ENCODE measurements at regions of chr2 and their contacts with region 1.

Region 1: DNA sequence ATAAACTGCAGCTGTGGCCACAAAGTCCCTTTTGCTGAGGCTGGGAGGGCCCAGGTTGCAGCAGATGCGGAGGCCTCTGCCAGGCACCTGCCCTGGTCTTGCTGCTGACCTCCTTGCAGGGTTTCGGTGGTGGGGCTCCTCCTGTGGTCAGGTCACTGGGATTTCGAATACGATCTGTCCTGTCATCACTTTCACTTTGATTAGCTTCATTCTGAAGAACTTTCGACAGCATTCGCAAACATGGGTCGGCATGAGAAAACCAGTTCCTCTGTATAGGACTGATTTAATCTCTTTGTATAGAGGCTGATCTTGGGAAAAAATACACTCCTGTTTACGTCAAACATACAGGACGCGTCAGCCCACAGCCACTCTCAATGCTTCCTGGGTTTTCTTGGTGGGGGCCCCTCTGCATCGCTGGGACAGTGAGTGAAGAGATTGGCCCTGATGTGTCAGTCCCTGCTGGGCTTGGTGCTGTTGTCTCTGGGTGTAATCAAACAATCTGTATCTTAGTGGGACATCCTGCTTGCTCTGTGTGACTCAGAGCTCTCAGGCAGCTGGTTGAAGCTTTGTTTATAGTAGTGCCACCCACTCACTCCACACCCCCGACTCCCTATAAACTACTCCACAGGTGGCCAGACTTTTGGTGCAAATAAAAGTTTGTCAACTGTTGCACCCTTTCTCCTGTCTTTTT is 209.4 kb upstream of the CXCR4 start:
- DNase-seq: peak in 2 of 3 donors; percentile 38 to 42
- H3K4me3 ChIP-seq: peak overlapping the region in 1 of 3 experiments; percentile 15
- H3K4me3 Mint-ChIP-seq: peak overlapping the region; percentile 53 to 59
- H3K27ac ChIP-seq: peak overlapping the region; percentile 27 to 59
- H3K27ac Mint-ChIP-seq: peak overlapping the region; percentile 43 to 88 (median 68)
- H3K4me1 ChIP-seq: peaks cover 56 to 60% of the 10 kb centered on the region in 2 donors
- H3K4me1 Mint-ChIP-seq: peaks cover 66% of the 10 kb centered on the region
- H3K27me3 ChIP-seq: no peaks in the 10 kb centered on the region
- H3K27me3 Mint-ChIP-seq: peaks cover 0 to 7% (median 0%) of the 10 kb centered on the region in 3 donors
- CTCF ChIP-seq: no peak

Region 2: GRCh38 chr2:136135921-136136906 is 191.1 kb before region 1 on chr2:
- intact Hi-C with region 1: loop called in 1 of 2 experiments (anchors 5 kb)
- DNase-seq: peak; percentile 30 to 53 (median 34)
- H3K4me3 ChIP-seq: peak overlapping the region in 2 of 3 experiments; percentile 6 to 66
- H3K4me3 Mint-ChIP-seq: peak overlapping the region; percentile 57 to 68
- H3K27ac ChIP-seq: peak overlapping the region; percentile 52 to 92
- H3K27ac Mint-ChIP-seq: peak overlapping the region; percentile 86 to 94 (median 89)
- H3K4me1 ChIP-seq: peaks cover 80 to 86% of the 10 kb centered on the region in 2 donors
- H3K4me1 Mint-ChIP-seq: peaks cover 96% of the 10 kb centered on the region
- H3K27me3 ChIP-seq: no peaks in the 10 kb centered on the region
- H3K27me3 Mint-ChIP-seq: peaks cover 0 to 2% (median 0%) of the 10 kb centered on the region in 3 donors
- CTCF ChIP-seq: no peak

Region 3: GRCh38 chr2:136212423-136213378 is 114.6 kb before region 1 on chr2:
- intact Hi-C with region 1: loop called (anchors 10 kb)
- DNase-seq: peak in 2 of 3 donors; percentile 41 to 42
- H3K4me3 ChIP-seq: no peak overlapping the region
- H3K4me3 Mint-ChIP-seq: no peak overlapping the region
- H3K27ac ChIP-seq: peak overlapping the region in 1 of 2 donors; percentile 96
- H3K27ac Mint-ChIP-seq: peak overlapping the region; percentile 93 to 99 (median 97)
- H3K4me1 ChIP-seq: peaks cover 72 to 91% of the 10 kb centered on the region in 2 donors
- H3K4me1 Mint-ChIP-seq: peaks cover 94% of the 10 kb centered on the region
- H3K27me3 ChIP-seq: no peaks in the 10 kb centered on the region
- H3K27me3 Mint-ChIP-seq: peaks cover 0 to 1% (median 0%) of the 10 kb centered on the region in 3 donors
- CTCF ChIP-seq: no peak

Region 4: GRCh38 chr2:136255648-136256463 is 71.5 kb before region 1 on chr2:
- intact Hi-C with region 1: loop called in 1 of 2 experiments (anchors 5 kb)
- DNase-seq: peak; percentile 87 to 95 (median 91)
- H3K4me3 ChIP-seq: no peak overlapping the region
- H3K4me3 Mint-ChIP-seq: no peak overlapping the region
- H3K27ac ChIP-seq: peak overlapping the region; percentile 88 to 91
- H3K27ac Mint-ChIP-seq: peak overlapping the region; percentile 94 to 96 (median 95)
- H3K4me1 ChIP-seq: peaks cover 37 to 39% of the 10 kb centered on the region in 2 donors
- H3K4me1 Mint-ChIP-seq: peaks cover 57% of the 10 kb centered on the region
- H3K27me3 ChIP-seq: no peaks in the 10 kb centered on the region
- H3K27me3 Mint-ChIP-seq: peaks cover 0 to 13% (median 0%) of the 10 kb centered on the region in 3 donors
- CTCF ChIP-seq: no peak

Region 5: DNA sequence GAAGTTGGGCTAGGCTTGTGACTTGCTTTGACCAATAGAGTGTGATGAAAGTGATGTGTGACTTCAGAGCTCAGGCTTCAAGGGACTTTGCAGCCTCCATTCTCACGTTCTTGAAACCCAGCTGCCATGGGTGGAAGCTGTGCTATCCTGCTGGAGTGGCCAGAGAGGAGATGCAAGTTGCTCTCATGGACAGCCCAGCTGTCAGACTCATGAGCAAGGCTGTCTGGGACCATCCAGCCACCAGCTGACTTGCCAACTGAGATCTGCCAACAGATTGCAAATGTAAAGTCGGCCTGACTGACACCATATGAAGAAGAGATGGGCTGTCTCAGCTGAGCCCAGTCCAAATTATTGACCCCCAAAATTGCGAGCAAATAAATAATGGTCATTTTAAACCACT is 17.0 kb after region 1 on chr2:
- intact Hi-C with region 1: no loop called
- DNase-seq: no peak
- H3K4me3 ChIP-seq: no peak overlapping the region
- H3K4me3 Mint-ChIP-seq: no peak overlapping the region
- H3K27ac ChIP-seq: no peak overlapping the region
- H3K27ac Mint-ChIP-seq: peak overlapping the region in 2 of 7 donors; percentile 18 to 26
- H3K4me1 ChIP-seq: no peaks in the 10 kb centered on the region
- H3K4me1 Mint-ChIP-seq: no peaks in the 10 kb centered on the region
- H3K27me3 ChIP-seq: no peaks in the 10 kb centered on the region
- H3K27me3 Mint-ChIP-seq: peaks cover 0 to 2% (median 2%) of the 10 kb centered on the region in 3 donors
- CTCF ChIP-seq: no peak

Region 6: GRCh38 chr2:136378712-136379595 is 51.6 kb after region 1 on chr2:
- intact Hi-C with region 1: loop called in 1 of 2 experiments (anchors 5 kb)
- DNase-seq: peak; percentile 59 to 74 (median 67)
- H3K4me3 ChIP-seq: peak overlapping the region in 1 of 3 experiments; percentile 12
- H3K4me3 Mint-ChIP-seq: no peak overlapping the region
- H3K27ac ChIP-seq: peak overlapping the region in 1 of 2 donors; percentile 36
- H3K27ac Mint-ChIP-seq: peak overlapping the region in 5 of 7 donors; percentile 17 to 66 (median 27)
- H3K4me1 ChIP-seq: peaks cover 22 to 23% of the 10 kb centered on the region in 2 donors
- H3K4me1 Mint-ChIP-seq: peaks cover 32% of the 10 kb centered on the region
- H3K27me3 ChIP-seq: no peaks in the 10 kb centered on the region
- H3K27me3 Mint-ChIP-seq: peaks cover 0 to 1% (median 0%) of the 10 kb centered on the region in 3 donors
- CTCF ChIP-seq: peak; percentile 88

Measured in CD14-positive monocyte (primary cell).